ENCODE measurements at regions of chr7 and their contacts with region 1.

Region 1: DNA sequence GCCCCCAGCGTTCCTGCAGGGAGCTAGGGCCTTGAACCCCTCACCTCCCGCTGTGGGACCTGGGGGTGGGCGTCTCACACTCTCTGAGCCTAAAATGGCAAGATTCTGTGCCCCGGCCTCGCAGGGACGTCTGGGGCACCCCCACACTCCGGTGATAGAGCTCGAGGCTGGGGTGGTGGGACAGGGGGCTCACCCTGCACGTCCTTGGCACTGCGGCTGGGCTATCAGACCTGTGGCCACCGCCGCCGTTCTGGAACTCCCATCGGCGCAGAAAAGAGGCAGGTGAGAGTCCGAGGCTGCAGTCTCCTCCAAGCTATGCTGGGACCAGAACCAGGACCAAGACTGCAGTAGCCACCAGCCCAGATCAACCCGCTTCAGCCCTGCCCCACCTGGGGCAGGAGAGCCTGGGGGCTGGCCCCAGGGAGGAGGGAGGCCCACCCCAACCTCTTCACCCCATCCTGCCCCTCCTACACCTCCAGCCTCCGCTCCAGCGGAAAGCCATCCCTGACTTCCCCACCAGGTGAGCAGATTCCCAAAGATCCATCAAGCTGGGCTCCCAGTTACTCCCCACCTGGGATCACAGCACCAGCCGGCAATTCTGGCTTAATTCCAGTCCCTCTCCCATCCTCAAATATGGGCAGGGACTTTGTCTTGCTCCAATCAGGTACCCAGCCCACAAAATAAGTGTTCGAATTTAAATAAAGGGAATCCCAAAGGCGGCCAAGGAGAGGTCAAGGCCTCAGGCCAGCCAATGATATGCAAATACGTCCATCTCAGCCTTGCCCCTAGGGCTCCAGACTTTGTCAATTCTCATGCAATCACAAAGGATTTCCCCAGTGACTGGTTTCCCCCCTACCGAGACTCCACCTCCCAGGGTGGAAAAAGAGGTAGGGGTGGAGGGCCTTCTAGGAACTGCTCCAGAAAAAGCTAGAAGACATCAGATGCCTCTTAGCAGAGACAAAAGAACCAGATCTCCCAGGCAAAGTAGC is 16.4 kb downstream of the TNRC18 start:
- DNase-seq: peak in 1 of 2 experiments; percentile 10
- H3K4me3 ChIP-seq: no peak overlapping the region
- H3K27ac ChIP-seq: no peak overlapping the region
- H3K4me1 ChIP-seq: peaks cover 19% of the 10 kb centered on the region
- H3K27me3 ChIP-seq: no peaks in the 10 kb centered on the region
- CTCF ChIP-seq: no peak

Region 2: DNA sequence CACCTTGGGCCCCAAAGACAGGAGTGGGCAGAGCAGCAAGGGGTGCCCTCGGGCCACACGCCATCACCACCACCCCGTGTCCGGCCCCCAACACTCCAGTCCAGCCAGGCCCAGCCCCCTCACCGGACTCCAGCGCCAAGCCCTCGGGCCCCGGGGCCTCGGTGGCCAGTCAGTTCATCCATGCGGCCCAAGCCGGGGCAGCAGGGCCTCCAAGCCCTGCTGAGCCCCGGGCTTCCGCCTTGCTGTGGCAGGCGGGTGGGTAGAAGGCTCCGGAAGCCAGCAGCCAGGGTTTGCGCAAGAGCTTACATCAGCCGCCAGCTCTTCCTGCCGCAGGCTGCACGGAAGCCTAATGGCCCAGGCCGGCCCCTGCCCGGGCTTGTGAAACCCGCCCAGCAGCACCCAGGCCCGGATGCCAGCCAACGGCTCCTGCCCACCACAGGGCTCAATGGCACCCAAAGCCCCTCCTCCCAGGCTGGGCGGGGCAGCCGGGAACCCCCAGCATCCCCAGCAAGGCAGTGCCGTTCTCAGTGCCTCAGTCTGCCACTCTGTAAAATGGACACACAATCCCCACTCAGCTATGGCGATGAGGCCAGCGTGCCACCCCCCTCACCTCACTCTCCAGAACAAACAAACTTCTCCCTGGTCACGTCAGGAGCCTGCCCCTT is 10.1 kb before region 1 on chr7:
- CTCF ChIA-PET with region 1: no interaction called
- POLR2A ChIA-PET with region 1: interaction called, 13 read pairs
- intact Hi-C with region 1: no loop called
- DNase-seq: peak; percentile 97 to 98
- H3K4me3 ChIP-seq: peak overlapping the region; percentile 84
- H3K27ac ChIP-seq: peak overlapping the region; percentile 75
- H3K4me1 ChIP-seq: peaks cover 18% of the 10 kb centered on the region
- H3K27me3 ChIP-seq: no peaks in the 10 kb centered on the region
- CTCF ChIP-seq: no peak